ENCODE measurements at regions of chr4 and their contacts with region 1.

Region 1: GRCh38 chr4:150242820-150243458 is 164.7 kb downstream of the DCLK2 start:
- DNase-seq: peak; percentile 36
- H3K27ac ChIP-seq: no peak overlapping the region
- CTCF ChIP-seq: peak; percentile 89

Region 2: GRCh38 chr4:150009533-150009932 is 233.4 kb before region 1 on chr4:
- CTCF ChIA-PET with region 1: interaction called, 11 read pairs
- POLR2A ChIA-PET with region 1: no interaction called
- DNase-seq: no peak
- H3K27ac ChIP-seq: no peak overlapping the region
- CTCF ChIP-seq: no peak

Region 3: DNA sequence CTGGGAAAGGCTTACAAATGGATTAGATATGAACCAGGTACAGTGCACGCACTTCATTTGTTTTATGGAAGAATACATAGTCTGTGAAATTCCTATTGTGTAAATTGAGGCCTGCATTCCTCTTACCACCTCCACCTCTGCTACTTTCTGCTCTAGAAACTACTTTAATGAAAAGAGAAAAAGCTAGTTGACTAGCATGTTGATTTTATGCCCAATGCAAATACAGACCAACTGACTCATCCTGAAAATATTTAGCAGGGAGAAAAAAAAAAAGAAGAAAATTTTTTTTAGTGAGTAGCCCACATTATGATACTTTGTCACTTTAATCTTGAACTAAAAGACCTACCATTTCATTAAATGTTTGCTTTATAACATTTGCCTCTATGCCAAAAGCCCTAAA is 123.4 kb before region 1 on chr4:
- CTCF ChIA-PET with region 1: no interaction called
- POLR2A ChIA-PET with region 1: no interaction called
- DNase-seq: peak; percentile 27
- H3K27ac ChIP-seq: no peak overlapping the region
- CTCF ChIP-seq: no peak

Region 4: DNA sequence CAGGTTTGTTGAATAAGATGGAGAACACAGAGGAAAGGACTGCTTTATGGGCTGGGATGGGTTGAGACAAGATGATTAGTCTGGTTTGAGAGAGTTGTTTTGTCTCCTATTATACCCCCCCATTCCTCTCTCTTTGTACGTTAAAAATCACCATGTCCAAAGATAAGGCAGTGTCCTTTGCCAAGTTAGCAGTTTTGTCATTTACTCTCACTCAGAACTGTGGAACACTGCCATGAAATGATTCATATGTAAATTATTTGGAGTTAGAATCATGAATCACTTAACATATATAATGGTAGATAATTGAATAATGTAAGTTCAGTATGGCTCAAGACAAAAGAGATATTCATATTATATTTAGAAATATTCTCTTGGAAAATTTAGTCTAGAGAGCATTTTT is 13.4 kb before region 1 on chr4:
- CTCF ChIA-PET with region 1: no interaction called
- POLR2A ChIA-PET with region 1: no interaction called
- DNase-seq: peak; percentile 42
- H3K27ac ChIP-seq: no peak overlapping the region
- CTCF ChIP-seq: no peak

Region 5: DNA sequence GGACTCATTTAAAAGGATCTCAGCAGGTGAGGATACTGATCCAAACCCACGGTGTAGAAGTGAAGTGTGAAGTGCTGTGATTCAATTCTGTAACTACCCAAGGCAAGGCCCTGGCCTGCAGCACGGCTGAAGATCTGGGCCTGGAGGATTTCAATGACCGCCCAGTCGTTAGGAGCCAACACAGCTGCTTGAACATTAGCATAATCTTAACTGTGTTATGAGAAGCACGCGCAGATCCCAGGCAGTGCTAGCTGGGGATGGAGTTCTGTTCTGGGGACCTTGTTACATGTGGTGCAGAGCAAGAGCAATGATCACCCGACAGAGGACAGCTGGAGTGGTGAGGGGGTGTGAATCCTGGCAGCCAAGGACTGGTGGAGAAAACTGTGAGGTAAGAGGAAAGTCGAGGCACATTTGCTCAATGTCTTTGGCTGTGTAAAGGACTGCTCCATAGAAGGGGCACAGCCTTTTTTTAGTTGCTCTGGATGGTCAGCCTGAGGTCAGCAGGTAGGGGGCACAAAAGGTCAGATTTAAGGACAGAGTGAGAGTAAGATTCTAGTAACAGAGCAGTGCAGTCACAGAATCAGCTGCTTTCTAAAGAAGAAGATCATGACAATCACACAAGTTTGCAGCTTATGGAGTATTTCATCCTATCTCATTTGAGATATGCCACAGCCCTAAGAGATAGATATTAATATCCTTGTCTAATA is 17.1 kb after region 1 on chr4:
- CTCF ChIA-PET with region 1: no interaction called
- POLR2A ChIA-PET with region 1: no interaction called
- DNase-seq: no peak
- H3K27ac ChIP-seq: no peak overlapping the region
- CTCF ChIP-seq: no peak